ENCODE measurements at regions of chr10 and their contacts with region 1.

Region 1: DNA sequence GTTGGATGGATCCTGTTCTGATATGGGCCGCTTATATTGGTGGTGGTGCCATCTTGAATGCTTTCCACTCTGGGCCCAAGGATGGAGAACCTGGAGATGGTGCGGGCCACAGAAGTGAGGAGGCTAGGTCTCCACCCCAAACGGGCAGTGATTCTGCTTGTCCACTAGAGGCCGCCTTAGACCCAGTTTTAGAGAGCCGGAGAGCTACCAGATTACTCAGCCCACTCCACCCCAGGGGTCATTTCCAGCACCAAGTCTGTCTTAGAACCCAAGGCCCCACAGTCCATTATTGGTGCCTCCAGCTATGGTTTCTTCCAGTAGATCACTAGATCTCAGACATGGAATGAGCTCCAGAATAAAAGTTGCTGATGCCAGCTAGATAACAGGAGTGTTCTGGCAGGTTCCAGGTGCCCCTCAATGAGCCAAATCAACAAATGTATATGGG is 11.8 kb upstream of the CAMK2G start:
- DNase-seq: peak; percentile 78
- H3K4me3 Mint-ChIP-seq: no peak overlapping the region
- H3K27ac Mint-ChIP-seq: no peak overlapping the region
- H3K4me1 Mint-ChIP-seq: peaks cover 2% of the 10 kb centered on the region
- H3K27me3 Mint-ChIP-seq: no peaks in the 10 kb centered on the region

Region 2: GRCh38 chr10:73899423-73899822 is 13.3 kb after region 1 on chr10:
- CTCF ChIA-PET with region 1: interaction called, 25 read pairs
- POLR2A ChIA-PET with region 1: no interaction called
- intact Hi-C with region 1: no loop called
- DNase-seq: no peak
- H3K4me3 Mint-ChIP-seq: no peak overlapping the region
- H3K27ac Mint-ChIP-seq: no peak overlapping the region
- H3K4me1 Mint-ChIP-seq: peaks cover 7% of the 10 kb centered on the region
- H3K27me3 Mint-ChIP-seq: no peaks in the 10 kb centered on the region

Region 3: GRCh38 chr10:73926152-73926764 is 40.2 kb after region 1 on chr10:
- CTCF ChIA-PET with region 1: interaction called, 28 read pairs
- POLR2A ChIA-PET with region 1: no interaction called
- intact Hi-C with region 1: no loop called
- DNase-seq: no peak
- H3K4me3 Mint-ChIP-seq: no peak overlapping the region
- H3K27ac Mint-ChIP-seq: no peak overlapping the region
- H3K4me1 Mint-ChIP-seq: peaks cover 16% of the 10 kb centered on the region
- H3K27me3 Mint-ChIP-seq: peaks cover 19% of the 10 kb centered on the region

Region 4: DNA sequence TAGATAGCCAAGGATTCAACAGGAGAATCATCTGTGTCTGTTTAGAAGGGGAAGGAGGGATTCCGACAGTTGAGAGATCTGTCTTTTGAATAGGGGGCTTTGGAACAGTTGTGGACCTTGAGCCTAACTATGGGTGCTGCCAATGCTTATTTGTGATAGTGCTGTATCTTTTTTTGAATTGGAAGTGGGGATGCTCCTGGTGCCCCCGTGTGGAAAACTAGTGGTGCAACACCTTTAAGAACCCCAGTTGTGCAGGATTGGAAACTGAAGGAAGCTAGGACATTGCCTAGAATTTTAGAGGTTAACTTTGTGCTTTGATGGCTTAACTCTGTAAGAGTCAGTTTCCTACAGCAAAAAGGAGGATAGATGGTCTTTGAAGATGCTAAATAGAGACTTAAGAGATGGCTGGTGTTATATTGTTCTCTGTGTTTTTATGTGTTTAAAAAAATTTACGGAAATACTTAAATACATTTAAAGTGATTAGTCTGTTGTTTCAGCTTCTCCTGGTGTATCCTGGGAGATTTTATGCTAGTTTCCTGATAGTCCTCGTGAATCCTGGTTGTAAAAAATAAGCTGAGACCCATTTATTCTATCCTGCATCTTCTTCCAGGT is 195.2 kb after region 1 on chr10:
- CTCF ChIA-PET with region 1: interaction called, 75 read pairs
- POLR2A ChIA-PET with region 1: interaction called, 3 read pairs
- intact Hi-C with region 1: loop called (anchors 1 kb)
- DNase-seq: peak; percentile 58
- H3K4me3 Mint-ChIP-seq: no peak overlapping the region
- H3K27ac Mint-ChIP-seq: no peak overlapping the region
- H3K4me1 Mint-ChIP-seq: peaks cover 45% of the 10 kb centered on the region
- H3K27me3 Mint-ChIP-seq: no peaks in the 10 kb centered on the region

Region 5: DNA sequence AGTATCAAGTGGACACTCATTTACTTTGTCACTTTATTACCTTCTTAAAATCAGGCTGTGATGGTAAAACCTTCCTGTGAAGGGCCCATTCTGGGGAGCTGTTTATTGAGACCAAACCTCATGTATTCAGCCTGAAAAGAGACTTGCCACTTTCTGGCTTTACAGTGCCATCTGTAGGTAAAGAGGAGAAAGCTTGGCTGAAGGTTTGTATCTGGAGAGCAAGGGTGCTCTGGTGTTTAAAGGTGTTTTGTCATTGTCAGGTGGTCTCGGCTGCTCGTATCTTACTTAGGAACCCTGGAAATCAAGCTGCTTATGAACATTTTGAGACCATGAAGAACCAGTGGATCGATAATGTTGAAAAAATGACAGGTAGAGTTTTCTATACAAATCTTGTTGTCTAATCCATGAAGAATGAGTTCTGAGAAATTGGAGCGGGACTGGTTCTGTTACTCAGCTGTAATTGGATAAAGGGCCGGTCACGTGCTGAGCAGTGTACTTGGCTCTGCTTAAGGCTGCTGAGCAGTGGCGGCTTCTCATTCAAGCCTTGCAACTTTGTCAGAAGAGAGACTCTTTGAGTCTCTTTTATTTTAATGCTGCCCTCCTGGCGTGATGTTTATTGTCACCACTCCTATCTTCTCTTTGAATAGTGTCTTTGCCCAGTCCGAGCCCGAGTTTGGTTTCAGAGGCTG is 217.6 kb after region 1 on chr10:
- CTCF ChIA-PET with region 1: interaction called, 35 read pairs
- POLR2A ChIA-PET with region 1: no interaction called
- intact Hi-C with region 1: no loop called
- DNase-seq: no peak
- H3K4me3 Mint-ChIP-seq: no peak overlapping the region
- H3K27ac Mint-ChIP-seq: no peak overlapping the region
- H3K4me1 Mint-ChIP-seq: no peaks in the 10 kb centered on the region
- H3K27me3 Mint-ChIP-seq: no peaks in the 10 kb centered on the region

Region 6: GRCh38 chr10:74189999-74190421 is 303.9 kb after region 1 on chr10:
- CTCF ChIA-PET with region 1: no interaction called
- POLR2A ChIA-PET with region 1: no interaction called
- intact Hi-C with region 1: no loop called
- DNase-seq: peak; percentile 27
- H3K4me3 Mint-ChIP-seq: peak overlapping the region; percentile 17
- H3K27ac Mint-ChIP-seq: peak overlapping the region; percentile 85
- H3K4me1 Mint-ChIP-seq: peaks cover 54% of the 10 kb centered on the region
- H3K27me3 Mint-ChIP-seq: no peaks in the 10 kb centered on the region

Measured in activated CD4-positive, alpha-beta memory T cell treated with anti-CD3 and anti-CD28 coated beads for 36 hours (primary cell).